GM12878 (cell line): ENCODE measurements at regions of chr13 and their contacts with region 1.

Region 1: DNA sequence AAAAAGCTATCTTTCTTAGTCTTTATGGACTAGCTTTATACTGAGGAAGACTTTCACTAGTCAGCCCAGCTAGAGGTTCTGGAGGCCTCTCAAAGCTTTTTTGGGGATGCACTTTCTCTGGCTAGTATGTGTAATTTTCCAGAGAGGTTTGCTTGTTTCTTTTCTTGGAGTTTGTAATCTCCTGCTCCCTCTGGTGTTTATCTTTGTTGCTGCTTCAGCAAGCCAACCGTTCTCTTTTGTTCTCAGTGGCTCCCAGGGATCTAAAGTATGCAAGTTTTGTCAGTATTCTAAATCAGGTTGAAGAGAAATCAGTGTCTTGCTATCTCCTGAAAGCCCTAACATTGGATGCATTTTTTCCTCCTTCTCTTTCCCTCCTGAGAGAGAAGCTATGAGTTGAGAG is 121.1 kb upstream of the MYO16 start:
- DNase-seq: no peak
- ATAC-seq: peak; percentile 34; the same call in 1 of the 3 replicates
- H3K4me3 ChIP-seq: no peak overlapping the region
- H3K27ac ChIP-seq: no peak overlapping the region
- H3K4me1 ChIP-seq: no peaks in the 10 kb centered on the region
- H3K27me3 ChIP-seq: no peaks in the 10 kb centered on the region
- CTCF ChIP-seq: peak in 2 of 3 experiments; percentile 29 to 46; a peak in 2 of 6 replicates
- EP300 ChIP-seq: no peak
- POLR2A ChIP-seq: no peak
- RAD21 ChIP-seq: peak; percentile 23; the same call in 1 of the 2 replicates

Region 2: DNA sequence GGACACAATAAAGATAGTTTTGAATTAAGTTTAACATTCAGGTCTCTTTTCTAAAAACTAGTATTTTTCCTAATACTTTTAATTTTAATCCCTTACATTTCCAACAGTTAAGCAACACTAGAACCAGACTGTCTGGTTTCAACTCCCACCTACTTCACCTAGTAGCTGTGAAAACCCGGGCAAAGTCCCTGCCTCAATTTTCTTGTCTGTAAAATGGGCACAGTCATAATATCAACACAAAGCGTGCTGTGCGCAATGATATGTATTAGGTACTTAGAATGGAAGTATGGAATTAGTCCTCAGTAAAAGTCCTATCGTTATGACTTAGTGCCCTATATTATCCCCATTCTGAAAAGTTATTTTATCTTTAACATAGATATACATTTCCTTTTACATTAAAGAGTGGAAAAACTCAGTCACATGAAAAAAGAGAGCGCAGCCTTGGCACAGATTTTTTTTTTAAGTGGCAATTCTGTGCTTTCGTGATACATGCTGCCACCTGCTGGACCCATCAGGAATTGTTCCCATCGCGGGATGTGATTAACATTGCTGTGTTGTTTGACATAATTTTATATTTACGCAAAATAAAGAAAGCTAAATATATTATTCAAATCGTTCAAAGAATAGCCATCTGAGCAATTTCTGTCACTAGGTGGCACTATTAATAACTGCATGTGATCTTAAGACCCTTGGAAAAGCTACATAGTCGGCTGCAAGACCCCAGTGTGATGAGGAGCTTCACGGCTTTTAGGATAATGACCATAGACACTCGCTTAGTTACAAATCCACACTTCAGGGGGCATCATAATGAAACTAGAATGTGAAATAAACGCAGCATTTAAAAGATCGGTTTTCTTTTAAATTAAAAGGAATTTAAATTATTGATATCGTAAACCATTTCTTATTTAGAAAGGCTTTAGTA is 352.8 kb before region 1 on chr13:
- CTCF ChIA-PET with region 1: no interaction called
- POLR2A ChIA-PET with region 1: no interaction called
- RAD21 ChIA-PET with region 1: no interaction called
- SMC1A ChIA-PET with region 1: no interaction called
- in situ Hi-C with region 1: no loop called
- intact Hi-C with region 1: no loop called
- DNase-seq: no peak
- ATAC-seq: peak; percentile 54
- H3K4me3 ChIP-seq: no peak overlapping the region
- H3K27ac ChIP-seq: no peak overlapping the region
- H3K4me1 ChIP-seq: no peaks in the 10 kb centered on the region
- H3K27me3 ChIP-seq: no peaks in the 10 kb centered on the region
- CTCF ChIP-seq: peak; percentile 71 to 76 (median 73)
- EP300 ChIP-seq: no peak
- POLR2A ChIP-seq: no peak
- RAD21 ChIP-seq: peak; percentile 71

Region 3: GRCh38 chr13:108342369-108343289 is 165.6 kb before region 1 on chr13:
- CTCF ChIA-PET with region 1: interaction called, 29 read pairs
- POLR2A ChIA-PET with region 1: no interaction called
- RAD21 ChIA-PET with region 1: interaction called, 5 read pairs
- SMC1A ChIA-PET with region 1: interaction called, 16 read pairs
- in situ Hi-C with region 1: no loop called
- intact Hi-C with region 1: loop called (anchors 5 kb)
- DNase-seq: peak; percentile 3
- ATAC-seq: peak; percentile 82
- H3K4me3 ChIP-seq: no peak overlapping the region
- H3K27ac ChIP-seq: no peak overlapping the region
- H3K4me1 ChIP-seq: no peaks in the 10 kb centered on the region; the same call in 1 of the 2 replicates
- H3K27me3 ChIP-seq: peaks cover 0 to 2% of the 10 kb centered on the region in 2 experiments; a peak in 1 of 4 replicates
- CTCF ChIP-seq: peak; percentile 33 to 56 (median 48); a peak in 5 of 6 replicates
- EP300 ChIP-seq: no peak
- POLR2A ChIP-seq: no peak
- RAD21 ChIP-seq: peak; percentile 30; the same call in 1 of the 2 replicates